ENCODE measurements at regions of chr11 and their contacts with region 1.

Region 1: DNA sequence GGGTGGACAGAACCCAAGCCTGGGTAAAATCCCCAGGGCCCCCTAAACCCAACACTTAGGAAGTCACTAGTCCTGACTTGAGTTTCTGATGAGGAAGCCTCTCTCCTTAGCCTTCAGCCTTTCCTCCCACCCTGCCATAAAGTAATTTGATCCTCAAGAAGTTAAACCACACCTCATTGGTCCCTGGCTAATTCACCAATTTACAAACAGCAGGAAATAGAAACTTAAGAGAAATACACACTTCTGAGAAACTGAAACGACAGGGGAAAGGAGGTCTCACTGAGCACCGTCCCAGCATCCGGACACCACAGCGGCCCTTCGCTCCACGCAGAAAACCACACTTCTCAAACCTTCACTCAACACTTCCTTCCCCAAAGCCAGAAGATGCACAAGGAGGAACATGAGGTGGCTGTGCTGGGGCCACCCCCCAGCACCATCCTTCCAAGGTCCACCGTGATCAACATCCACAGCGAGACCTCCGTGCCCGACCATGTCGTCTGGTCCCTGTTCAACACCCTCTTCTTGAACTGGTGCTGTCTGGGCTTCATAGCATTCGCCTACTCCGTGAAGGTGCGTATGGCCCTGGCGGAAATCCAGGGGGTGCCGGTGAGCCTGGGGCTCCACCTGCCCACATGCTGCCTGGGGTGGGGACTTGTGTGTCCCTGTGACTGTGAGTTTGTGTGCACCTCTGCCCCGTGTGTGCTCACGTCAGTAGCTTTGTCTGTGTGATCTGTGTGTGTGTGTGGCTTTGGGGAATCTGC is at the start of gene IFITM1:
- DNase-seq: peak; percentile 90
- ATAC-seq: peak; percentile 45
- H3K4me3 Mint-ChIP-seq: peak within 1 kb of the TSS; percentile 87
- H3K27ac Mint-ChIP-seq: peak within 1 kb of the TSS; percentile 99
- H3K4me1 Mint-ChIP-seq: peaks cover 13% of the 10 kb centered on the region
- H3K27me3 Mint-ChIP-seq: no peaks in the 10 kb centered on the region
- total RNA-seq, gene IFITM1: 1,265 to 1,278 TPM

Region 2: GRCh38 chr11:207208-207862 is 106.6 kb before region 1 on chr11 and contains the starts of genes BET1L and RIC8A:
- CTCF ChIA-PET with region 1: no interaction called
- POLR2A ChIA-PET with region 1: interaction called, 15 read pairs
- DNase-seq: peak; percentile 98
- ATAC-seq: peak; percentile 78
- H3K4me3 Mint-ChIP-seq: peak within 1 kb of the TSS; percentile 94
- H3K27ac Mint-ChIP-seq: peak within 1 kb of the TSS; percentile 99
- H3K4me1 Mint-ChIP-seq: peaks cover 63% of the 10 kb centered on the region
- H3K27me3 Mint-ChIP-seq: no peaks in the 10 kb centered on the region
- total RNA-seq, gene BET1L: 33.8 to 34.2 TPM
- total RNA-seq, gene RIC8A: 121 to 126 TPM

Region 3: DNA sequence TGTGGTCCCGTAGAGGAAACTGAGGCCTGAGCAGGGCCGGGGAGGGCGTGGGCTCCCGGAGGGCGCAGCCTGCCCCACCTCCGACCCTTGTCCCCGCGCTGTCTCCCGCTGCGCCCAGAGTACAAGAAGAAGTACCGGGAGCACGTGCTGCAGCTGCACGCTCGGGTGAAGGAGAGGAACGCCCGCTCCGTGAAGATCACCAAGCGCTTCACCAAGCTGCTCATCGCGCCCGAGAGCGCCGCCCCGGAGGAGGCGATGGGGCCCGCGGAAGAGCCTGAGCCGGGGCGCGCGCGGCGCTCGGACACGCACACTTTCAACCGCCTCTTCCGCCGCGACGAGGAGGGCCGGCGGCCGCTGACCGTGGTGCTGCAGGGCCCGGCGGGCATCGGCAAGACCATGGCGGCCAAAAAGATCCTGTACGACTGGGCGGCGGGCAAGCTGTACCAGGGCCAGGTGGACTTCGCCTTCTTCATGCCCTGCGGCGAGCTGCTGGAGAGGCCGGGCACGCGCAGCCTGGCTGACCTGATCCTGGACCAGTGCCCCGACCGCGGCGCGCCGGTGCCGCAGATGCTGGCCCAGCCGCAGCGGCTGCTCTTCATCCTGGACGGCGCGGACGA is 33.9 kb before region 1 on chr11:
- CTCF ChIA-PET with region 1: interaction called, 5 read pairs
- POLR2A ChIA-PET with region 1: interaction called, 73 read pairs
- DNase-seq: peak; percentile 68
- ATAC-seq: peak; percentile 28
- H3K4me3 Mint-ChIP-seq: peak overlapping the region; percentile 81
- H3K27ac Mint-ChIP-seq: peak overlapping the region; percentile 90
- H3K4me1 Mint-ChIP-seq: peaks cover 55% of the 10 kb centered on the region
- H3K27me3 Mint-ChIP-seq: peaks cover 9% of the 10 kb centered on the region

Region 4: GRCh38 chr11:299951-300735 is 13.8 kb before region 1 on chr11:
- CTCF ChIA-PET with region 1: interaction called, 38 read pairs
- POLR2A ChIA-PET with region 1: interaction called, 60 read pairs
- DNase-seq: no peak
- ATAC-seq: no peak
- H3K4me3 Mint-ChIP-seq: no peak overlapping the region
- H3K27ac Mint-ChIP-seq: peak overlapping the region; percentile 46
- H3K4me1 Mint-ChIP-seq: peaks cover 76% of the 10 kb centered on the region
- H3K27me3 Mint-ChIP-seq: peaks cover 9% of the 10 kb centered on the region

Region 5: DNA sequence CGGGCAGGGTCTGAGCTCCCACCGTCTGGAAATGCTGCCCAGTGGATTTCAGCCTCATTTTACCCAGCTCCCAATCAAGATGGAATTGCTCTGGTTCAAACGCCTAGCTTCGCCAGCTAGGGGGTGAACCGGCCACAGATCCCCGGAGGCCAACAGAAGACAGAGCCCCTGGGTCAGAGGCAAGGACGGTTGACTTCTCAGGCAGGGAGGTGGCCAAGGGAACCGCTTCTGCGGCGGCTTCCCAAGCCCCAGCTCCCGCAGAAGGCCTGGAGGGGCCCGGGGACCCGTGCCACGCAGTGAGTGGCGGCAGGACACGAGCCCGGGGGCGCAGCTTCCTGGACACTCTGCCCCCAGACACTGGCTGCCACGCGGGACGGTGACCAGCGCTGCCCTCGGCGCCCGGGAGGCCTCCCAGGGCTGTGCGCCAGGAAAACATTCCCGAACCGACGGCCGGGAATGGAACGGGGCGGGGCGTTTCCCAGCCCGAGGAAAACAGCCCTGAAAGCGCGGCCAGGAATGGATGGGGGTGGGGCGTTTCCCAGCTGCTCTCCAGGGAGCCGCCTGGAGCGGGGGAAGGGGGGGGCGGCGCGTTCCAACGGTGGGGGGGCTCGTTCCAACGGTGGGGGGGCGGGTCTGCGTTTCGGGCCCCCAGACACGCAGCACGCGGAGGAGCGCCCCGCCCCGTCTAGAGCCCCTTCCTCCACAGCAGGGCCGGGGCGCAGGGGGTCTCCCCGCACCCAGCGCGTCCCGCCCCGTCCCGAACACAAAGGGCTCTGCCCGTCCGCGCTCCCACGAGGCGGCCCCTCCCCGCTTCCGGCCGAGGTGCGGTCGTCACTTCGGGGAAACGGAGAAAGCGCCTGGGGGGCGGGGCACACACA is 41.9 kb after region 1 on chr11:
- CTCF ChIA-PET with region 1: interaction called, 17 read pairs
- POLR2A ChIA-PET with region 1: interaction called, 55 read pairs
- DNase-seq: peak; percentile 92
- ATAC-seq: peak; percentile 61
- H3K4me3 Mint-ChIP-seq: peak overlapping the region; percentile 84
- H3K27ac Mint-ChIP-seq: peak overlapping the region; percentile 89
- H3K4me1 Mint-ChIP-seq: peaks cover 46% of the 10 kb centered on the region
- H3K27me3 Mint-ChIP-seq: peaks cover 13% of the 10 kb centered on the region